ENCODE measurements at regions of chr17 and their contacts with region 1.

Region 1: GRCh38 chr17:34420254-34420766 is 57.3 kb upstream of the CCL1 start:
- DNase-seq: peak; percentile 31
- ATAC-seq: peak; percentile 72
- H3K4me3 ChIP-seq: no peak overlapping the region
- H3K27ac ChIP-seq: no peak overlapping the region
- H3K4me1 ChIP-seq: no peaks in the 10 kb centered on the region
- H3K27me3 ChIP-seq: peaks cover 0 to 3% of the 10 kb centered on the region in 2 experiments; a peak in 2 of 5 replicates
- CTCF ChIP-seq: peak; percentile 84
- EP300 ChIP-seq: no peak
- POLR2A ChIP-seq: no peak
- RAD21 ChIP-seq: peak; percentile 77

Region 2: GRCh38 chr17:34389126-34389750 is 31.1 kb before region 1 on chr17:
- CTCF ChIA-PET with region 1: no interaction called
- POLR2A ChIA-PET with region 1: no interaction called
- in situ Hi-C with region 1: no loop called
- intact Hi-C with region 1: no loop called
- DNase-seq: no peak
- ATAC-seq: no peak
- H3K4me3 ChIP-seq: no peak overlapping the region
- H3K27ac ChIP-seq: no peak overlapping the region
- H3K4me1 ChIP-seq: no peaks in the 10 kb centered on the region
- H3K27me3 ChIP-seq: 0 out of 5 replicates have a peak, but pooled peaks cover 0 to 4% of the 10 kb centered on the region in 2 experiments
- CTCF ChIP-seq: no peak
- EP300 ChIP-seq: no peak
- POLR2A ChIP-seq: no peak
- RAD21 ChIP-seq: no peak

Region 3: DNA sequence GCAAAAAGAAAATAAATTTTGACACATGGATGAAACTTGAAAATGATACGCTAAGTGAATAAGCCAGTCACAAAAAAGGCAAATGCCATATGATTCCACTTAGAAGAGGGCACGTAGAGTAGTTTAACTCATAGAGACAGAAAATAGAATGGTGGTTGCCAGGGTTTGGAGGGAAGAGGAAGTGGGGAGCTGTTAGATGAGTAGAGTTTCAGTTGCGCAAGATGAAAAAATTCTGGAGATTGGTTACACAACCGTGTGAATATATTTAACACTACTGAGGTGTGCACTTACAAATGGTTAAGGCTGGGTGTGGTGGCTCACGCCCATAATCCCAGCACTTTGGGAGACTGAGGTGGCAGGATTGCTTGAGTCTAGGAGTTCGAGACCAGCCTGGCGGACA is 65.7 kb after region 1 on chr17:
- CTCF ChIA-PET with region 1: no interaction called
- POLR2A ChIA-PET with region 1: no interaction called
- in situ Hi-C with region 1: loop called (anchors 10 kb)
- intact Hi-C with region 1: no loop called
- DNase-seq: no peak
- ATAC-seq: no peak
- H3K4me3 ChIP-seq: no peak overlapping the region
- H3K27ac ChIP-seq: no peak overlapping the region
- H3K4me1 ChIP-seq: no peaks in the 10 kb centered on the region
- H3K27me3 ChIP-seq: peaks cover 0 to 2% of the 10 kb centered on the region in 2 experiments; a peak in 1 of 5 replicates
- CTCF ChIP-seq: no peak
- EP300 ChIP-seq: no peak
- POLR2A ChIP-seq: no peak
- RAD21 ChIP-seq: no peak

Region 4: DNA sequence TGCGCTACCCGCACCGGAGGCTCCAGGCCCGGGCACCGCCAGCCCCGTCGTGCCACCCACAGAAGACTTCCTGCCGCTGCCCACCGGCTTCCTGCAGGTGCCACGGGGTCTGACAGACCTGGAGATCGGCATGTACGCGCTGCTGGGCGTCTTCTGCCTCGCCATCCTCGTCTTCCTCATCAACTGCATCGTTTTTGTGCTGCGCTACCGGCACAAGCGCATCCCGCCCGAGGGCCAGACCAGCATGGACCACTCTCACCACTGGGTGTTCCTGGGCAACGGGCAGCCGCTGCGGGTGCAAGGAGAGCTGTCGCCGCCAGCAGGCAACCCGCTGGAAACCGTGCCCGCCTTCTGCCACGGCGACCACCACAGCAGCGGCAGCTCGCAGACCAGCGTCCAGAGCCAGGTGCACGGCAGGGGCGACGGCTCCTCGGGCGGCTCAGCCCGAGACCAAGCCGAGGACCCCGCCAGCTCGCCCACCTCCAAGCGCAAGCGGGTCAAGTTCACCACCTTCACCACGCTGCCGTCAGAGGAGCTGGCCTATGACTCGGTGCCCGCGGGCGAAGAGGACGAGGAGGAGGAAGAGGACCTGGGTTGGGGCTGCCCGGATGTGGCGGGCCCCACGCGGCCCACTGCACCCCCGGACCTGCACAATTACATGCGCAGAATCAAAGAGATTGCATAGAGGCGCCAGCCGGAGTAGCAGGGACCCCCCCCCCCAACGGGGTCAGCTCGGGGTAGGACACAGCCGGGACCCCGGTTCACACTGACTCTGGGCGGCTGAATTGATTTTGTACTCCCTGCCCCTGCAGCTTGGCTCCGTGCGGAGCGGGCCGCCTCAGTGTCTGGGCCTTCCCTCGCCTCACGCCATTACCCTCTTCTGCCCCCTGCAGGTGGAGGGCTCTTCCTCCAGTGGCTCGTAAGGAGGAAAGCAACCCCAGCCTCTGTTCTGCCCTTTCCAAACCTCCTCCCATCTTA is 217.5 kb after region 1 on chr17:
- CTCF ChIA-PET with region 1: interaction called, 19 read pairs
- POLR2A ChIA-PET with region 1: no interaction called
- in situ Hi-C with region 1: loop called (anchors 5 kb)
- intact Hi-C with region 1: no loop called
- DNase-seq: peak; percentile 45
- ATAC-seq: peak; percentile 95
- H3K4me3 ChIP-seq: no peak overlapping the region
- H3K27ac ChIP-seq: no peak overlapping the region
- H3K4me1 ChIP-seq: no peaks in the 10 kb centered on the region
- H3K27me3 ChIP-seq: peaks cover 7 to 26% of the 10 kb centered on the region in 2 experiments; a peak in 4 of 5 replicates
- CTCF ChIP-seq: peak; percentile 85
- EP300 ChIP-seq: no peak
- POLR2A ChIP-seq: no peak
- RAD21 ChIP-seq: peak; percentile 55

Region 5: GRCh38 chr17:34980681-34981537 is 560.6 kb after region 1 on chr17:
- CTCF ChIA-PET with region 1: no interaction called
- POLR2A ChIA-PET with region 1: no interaction called
- in situ Hi-C with region 1: no loop called
- intact Hi-C with region 1: loop called (anchors 5 kb)
- DNase-seq: peak; percentile 83
- ATAC-seq: peak; percentile 93
- H3K4me3 ChIP-seq: peak overlapping the region; percentile 73 to 87 (median 86)
- H3K27ac ChIP-seq: peak overlapping the region; percentile 98
- H3K4me1 ChIP-seq: peaks cover 44% of the 10 kb centered on the region
- H3K27me3 ChIP-seq: no peaks in the 10 kb centered on the region
- CTCF ChIP-seq: peak; percentile 56
- EP300 ChIP-seq: no peak
- POLR2A ChIP-seq: peak; percentile 29 to 87
- RAD21 ChIP-seq: no peak; the same call in 1 of the 2 replicates

Region 6: DNA sequence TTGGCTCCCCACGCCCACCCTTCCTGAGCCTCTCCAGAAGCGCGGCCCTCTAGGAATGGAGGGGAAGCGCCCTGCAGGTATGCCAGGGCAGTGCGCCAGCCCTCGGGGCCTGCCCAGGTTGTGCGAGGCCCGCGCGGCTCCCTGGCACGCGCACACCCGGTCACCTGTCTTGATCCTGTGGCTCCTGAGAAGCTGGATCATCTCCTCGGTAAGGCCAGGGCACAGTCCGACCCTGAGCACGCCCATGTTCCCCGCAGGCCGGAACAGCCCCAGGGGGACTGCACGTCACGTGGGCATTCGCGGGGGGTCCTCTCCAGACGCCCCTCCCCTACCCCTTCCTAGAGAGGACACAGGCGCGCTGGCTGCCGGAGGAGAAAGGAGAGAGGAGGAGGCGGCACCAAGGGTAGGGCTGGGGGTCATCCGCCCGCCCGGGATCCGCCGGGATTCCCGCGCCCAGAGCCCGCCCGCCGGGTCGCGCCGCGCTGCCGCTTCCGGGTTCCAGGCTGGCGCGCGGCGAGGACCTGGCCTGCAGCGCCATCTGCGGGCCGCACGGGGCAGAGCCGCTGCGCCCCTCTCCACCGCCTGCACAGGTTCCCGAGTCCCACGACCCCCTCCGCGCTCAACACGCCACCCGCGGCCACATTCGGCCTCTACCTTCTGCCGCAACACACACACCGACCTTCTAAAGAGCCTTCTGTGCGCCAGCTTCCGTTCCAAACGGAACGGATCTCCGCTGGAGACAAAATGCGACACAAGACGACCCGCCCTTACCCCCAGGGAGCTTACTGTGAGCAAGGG is 699.3 kb after region 1 on chr17 and contains the start of gene RAD51D:
- CTCF ChIA-PET with region 1: interaction called, 5 read pairs
- POLR2A ChIA-PET with region 1: no interaction called
- in situ Hi-C with region 1: loop called (anchors 10 kb)
- intact Hi-C with region 1: no loop called
- DNase-seq: peak; percentile 60
- ATAC-seq: peak; percentile 88
- H3K4me3 ChIP-seq: peak within 1 kb of the TSS; percentile 80 to 94 (median 86)
- H3K27ac ChIP-seq: peak within 1 kb of the TSS; percentile 63
- H3K4me1 ChIP-seq: peaks cover 29% of the 10 kb centered on the region
- H3K27me3 ChIP-seq: no peaks in the 10 kb centered on the region; a peak in 1 of 5 replicates
- CTCF ChIP-seq: peak; percentile 89
- EP300 ChIP-seq: no peak
- POLR2A ChIP-seq: peak in 1 of 2 experiments; percentile 61; a peak in 3 of 4 replicates
- RAD21 ChIP-seq: peak; percentile 99
- total RNA-seq, gene RAD51D: 12.9 and 13.1 TPM in 2 replicates

Region 7: DNA sequence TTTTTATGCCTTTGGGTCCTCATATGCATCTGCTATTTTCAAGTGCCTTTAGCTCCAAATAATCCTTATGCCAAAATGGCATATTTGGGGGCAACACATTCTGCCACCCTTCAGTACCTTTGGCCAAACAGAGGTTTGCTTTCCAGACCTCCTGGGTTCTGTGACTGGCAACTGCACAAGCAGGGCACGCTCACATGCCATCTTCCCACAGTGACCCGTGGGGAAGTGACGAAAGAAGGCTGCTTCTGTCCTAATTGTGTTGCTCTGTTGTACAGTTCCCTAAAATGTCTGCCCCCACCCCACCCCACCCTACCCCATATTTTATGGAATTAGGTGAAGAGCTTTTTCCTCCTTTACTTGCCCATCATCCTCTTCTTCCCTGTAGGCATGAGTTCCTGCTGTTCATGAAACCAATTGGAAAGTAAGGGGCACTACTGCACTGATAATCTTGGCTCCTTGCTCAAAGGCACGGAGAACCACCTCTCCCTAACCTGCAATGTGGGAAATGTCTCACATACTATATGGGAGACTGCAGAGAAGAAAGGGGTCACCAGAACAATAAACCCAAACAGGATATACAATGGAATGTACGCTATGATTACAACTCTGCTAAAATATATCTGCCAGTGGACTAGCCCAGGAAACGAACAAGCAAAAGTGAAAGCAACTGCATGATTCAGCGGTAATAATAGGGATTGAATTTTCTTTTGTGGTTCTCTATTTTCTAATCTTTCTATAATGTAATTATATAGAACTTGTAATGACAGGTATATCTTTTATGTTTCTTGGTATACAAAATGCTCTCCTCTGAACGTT is 1120.5 kb after region 1 on chr17:
- CTCF ChIA-PET with region 1: interaction called, 3 read pairs
- POLR2A ChIA-PET with region 1: no interaction called
- in situ Hi-C with region 1: loop called (anchors 25 kb)
- intact Hi-C with region 1: loop called (anchors 10 kb)
- DNase-seq: no peak
- ATAC-seq: no peak
- H3K4me3 ChIP-seq: peak overlapping the region in 2 of 3 experiments; percentile 27 to 42; a peak in 3 of 6 replicates
- H3K27ac ChIP-seq: no peak overlapping the region
- H3K4me1 ChIP-seq: no peaks in the 10 kb centered on the region
- H3K27me3 ChIP-seq: 0 out of 5 replicates have a peak, but pooled peaks cover 0 to 3% of the 10 kb centered on the region in 2 experiments
- CTCF ChIP-seq: no peak
- EP300 ChIP-seq: no peak
- POLR2A ChIP-seq: no peak
- RAD21 ChIP-seq: no peak

Measured in HepG2 (cell line).